ENCODE measurements at regions of chr2 and their contacts with region 1.

Region 1: DNA sequence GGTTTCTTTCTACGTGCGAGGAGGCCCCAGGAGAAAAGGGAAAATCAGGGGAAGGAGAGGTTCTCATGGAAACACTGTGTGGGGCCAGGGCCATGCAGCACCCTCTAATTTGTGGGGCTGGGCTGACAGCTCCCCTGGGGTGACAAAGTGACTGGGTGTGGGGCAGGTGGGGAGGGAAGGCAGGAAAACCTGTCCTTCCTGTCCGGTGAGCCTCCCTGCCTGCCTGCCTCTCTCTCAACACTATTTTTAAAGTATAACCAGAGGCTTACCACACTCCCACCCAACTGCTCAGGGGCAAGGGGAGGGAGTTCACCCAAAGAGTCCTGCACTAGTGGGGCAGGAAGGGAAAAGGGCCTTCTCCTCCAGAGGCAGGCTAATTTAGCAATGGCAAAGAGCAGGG is 10.5 kb upstream of the EPAS1 start:
- DNase-seq: no peak
- ATAC-seq: no peak
- H3K4me3 ChIP-seq: no peak overlapping the region
- H3K27ac ChIP-seq: no peak overlapping the region
- H3K4me1 ChIP-seq: peaks cover 24% of the 10 kb centered on the region
- H3K27me3 ChIP-seq: peaks cover 0 to 35% of the 10 kb centered on the region in 2 experiments; a peak in 3 of 5 replicates
- CTCF ChIP-seq: no peak
- EP300 ChIP-seq: no peak
- POLR2A ChIP-seq: no peak
- RAD21 ChIP-seq: no peak

Region 2: GRCh38 chr2:47029737-47030524 is 743.2 kb after region 1 on chr2:
- CTCF ChIA-PET with region 1: no interaction called
- POLR2A ChIA-PET with region 1: no interaction called
- in situ Hi-C with region 1: no loop called
- intact Hi-C with region 1: loop called (anchors 5 kb)
- DNase-seq: peak; percentile 81
- ATAC-seq: peak; percentile 8; the same call in 1 of the 3 replicates
- H3K4me3 ChIP-seq: no peak overlapping the region
- H3K27ac ChIP-seq: peak overlapping the region; percentile 46
- H3K4me1 ChIP-seq: peaks cover 72% of the 10 kb centered on the region
- H3K27me3 ChIP-seq: no peaks in the 10 kb centered on the region
- CTCF ChIP-seq: no peak
- EP300 ChIP-seq: 0 out of 4 replicates have a peak, but pooled peaks of 1 of the 2 experiments have one; percentile 15
- POLR2A ChIP-seq: no peak
- RAD21 ChIP-seq: no peak